Colonic mucosa (tissue), 4 donors: ENCODE measurements at regions of chr20 and their contacts with region 1.

Region 1: GRCh38 chr20:10673988-10674711 is at the start of gene JAG1:
- DNase-seq: peak; percentile 97
- H3K4me3 ChIP-seq: peak within 1 kb of the TSS; percentile 77
- H3K27ac ChIP-seq: peak within 1 kb of the TSS; percentile 100
- H3K4me1 ChIP-seq: no peaks in the 10 kb centered on the region
- H3K27me3 ChIP-seq: no peaks in the 10 kb centered on the region
- CTCF ChIP-seq: no peak
- total RNA-seq, gene JAG1: 66.5 to 102 TPM

Region 2: GRCh38 chr20:10434467-10434831 is 239.7 kb before region 1 on chr20:
- intact Hi-C with region 1: loop called (anchors 10 kb)
- DNase-seq: peak; percentile 95
- H3K4me3 ChIP-seq: peak overlapping the region; percentile 90
- H3K27ac ChIP-seq: peak overlapping the region; percentile 86
- H3K4me1 ChIP-seq: peaks cover 7% of the 10 kb centered on the region
- H3K27me3 ChIP-seq: no peaks in the 10 kb centered on the region
- CTCF ChIP-seq: no peak

Region 3: GRCh38 chr20:11204926-11205768 is 531.0 kb after region 1 on chr20:
- intact Hi-C with region 1: loop called (anchors 10 kb)
- DNase-seq: peak; percentile 78
- H3K4me3 ChIP-seq: no peak overlapping the region
- H3K27ac ChIP-seq: no peak overlapping the region
- H3K4me1 ChIP-seq: no peaks in the 10 kb centered on the region
- H3K27me3 ChIP-seq: no peaks in the 10 kb centered on the region
- CTCF ChIP-seq: peak; percentile 72